ENCODE measurements at regions of chr2 and their contacts with region 1.

Region 1: GRCh38 chr2:196131384-196131937 is 39.9 kb downstream of the STK17B start:
- DNase-seq: peak in 4 of 9 donors; percentile 30 to 57 (median 50)
- ATAC-seq: peak; percentile 58
- H3K4me3 ChIP-seq: no peak overlapping the region
- H3K4me3 Mint-ChIP-seq: peak overlapping the region in 3 of 10 donors; percentile 1 to 36 (median 32)
- H3K27ac ChIP-seq: no peak overlapping the region
- H3K27ac Mint-ChIP-seq: peak overlapping the region in 8 of 9 donors; percentile 63 to 91 (median 79)
- H3K4me1 ChIP-seq: no peaks in the 10 kb centered on the region
- H3K4me1 Mint-ChIP-seq: peaks cover 0 to 27% (median 16%) of the 10 kb centered on the region in 7 donors
- H3K27me3 ChIP-seq: no peaks in the 10 kb centered on the region
- H3K27me3 Mint-ChIP-seq: no peaks in the 10 kb centered on the region

Region 2: GRCh38 chr2:196149948-196150347 is 18.5 kb after region 1 on chr2:
- CTCF ChIA-PET with region 1: no interaction called
- POLR2A ChIA-PET with region 1: interaction called, 5 read pairs
- intact Hi-C with region 1: loop called in 1 of 2 experiments (anchors 2 kb)
- DNase-seq: peak in 2 of 9 donors; percentile 19 to 49
- ATAC-seq: peak; percentile 48
- H3K4me3 ChIP-seq: no peak overlapping the region
- H3K4me3 Mint-ChIP-seq: peak overlapping the region; percentile 1 to 87 (median 72)
- H3K27ac ChIP-seq: peak overlapping the region; percentile 71
- H3K27ac Mint-ChIP-seq: peak overlapping the region; percentile 81 to 95 (median 90)
- H3K4me1 ChIP-seq: peaks cover 63 to 86% of the 10 kb centered on the region in 2 donors
- H3K4me1 Mint-ChIP-seq: peaks cover 49 to 99% (median 94%) of the 10 kb centered on the region in 7 donors
- H3K27me3 ChIP-seq: no peaks in the 10 kb centered on the region
- H3K27me3 Mint-ChIP-seq: no peaks in the 10 kb centered on the region

Region 3: GRCh38 chr2:196337208-196337953 is 205.9 kb after region 1 on chr2:
- CTCF ChIA-PET with region 1: no interaction called
- POLR2A ChIA-PET with region 1: no interaction called
- intact Hi-C with region 1: loop called (anchors 1 kb)
- DNase-seq: peak in 5 of 9 donors; percentile 10 to 39 (median 19)
- ATAC-seq: peak; percentile 52
- H3K4me3 ChIP-seq: no peak overlapping the region
- H3K4me3 Mint-ChIP-seq: no peak overlapping the region
- H3K27ac ChIP-seq: no peak overlapping the region
- H3K27ac Mint-ChIP-seq: no peak overlapping the region
- H3K4me1 ChIP-seq: no peaks in the 10 kb centered on the region
- H3K4me1 Mint-ChIP-seq: peaks cover 0 to 6% (median 1%) of the 10 kb centered on the region in 7 donors
- H3K27me3 ChIP-seq: no peaks in the 10 kb centered on the region
- H3K27me3 Mint-ChIP-seq: peaks cover 0 to 18% (median 3%) of the 10 kb centered on the region in 5 donors

Region 4: DNA sequence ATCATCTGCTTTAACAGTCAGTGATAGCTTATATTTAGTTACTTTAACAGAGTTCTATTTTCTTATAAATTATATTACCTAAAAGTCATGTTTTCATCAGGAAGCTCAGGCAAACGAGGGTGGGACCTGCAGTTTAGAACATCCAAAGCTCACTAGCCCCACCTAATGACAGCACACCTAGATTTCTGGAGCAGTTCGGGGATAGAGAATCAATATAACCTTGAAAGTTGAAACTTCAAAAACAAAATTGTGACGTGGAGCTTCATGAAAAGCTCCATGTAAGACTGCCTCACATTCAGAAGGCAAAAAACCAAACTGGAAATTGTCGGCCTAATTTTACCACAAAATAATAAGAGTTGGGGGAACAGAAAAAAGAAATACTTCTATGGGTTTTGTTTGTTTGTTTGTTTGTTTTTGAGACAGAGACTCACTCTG is 322.2 kb after region 1 on chr2:
- CTCF ChIA-PET with region 1: no interaction called
- POLR2A ChIA-PET with region 1: no interaction called
- intact Hi-C with region 1: loop called in 1 of 2 experiments (anchors 1 kb)
- DNase-seq: peak in 7 of 9 donors; percentile 2 to 39 (median 19)
- ATAC-seq: peak; percentile 60
- H3K4me3 ChIP-seq: no peak overlapping the region
- H3K4me3 Mint-ChIP-seq: no peak overlapping the region
- H3K27ac ChIP-seq: no peak overlapping the region
- H3K27ac Mint-ChIP-seq: no peak overlapping the region
- H3K4me1 ChIP-seq: no peaks in the 10 kb centered on the region
- H3K4me1 Mint-ChIP-seq: peaks cover 0 to 6% (median 0%) of the 10 kb centered on the region in 7 donors
- H3K27me3 ChIP-seq: peaks cover 0 to 6% of the 10 kb centered on the region in 2 donors
- H3K27me3 Mint-ChIP-seq: peaks cover 25 to 42% (median 31%) of the 10 kb centered on the region in 5 donors